HEK293 (cell line): ENCODE measurements at regions of chr7 and their contacts with region 1.

Region 1: DNA sequence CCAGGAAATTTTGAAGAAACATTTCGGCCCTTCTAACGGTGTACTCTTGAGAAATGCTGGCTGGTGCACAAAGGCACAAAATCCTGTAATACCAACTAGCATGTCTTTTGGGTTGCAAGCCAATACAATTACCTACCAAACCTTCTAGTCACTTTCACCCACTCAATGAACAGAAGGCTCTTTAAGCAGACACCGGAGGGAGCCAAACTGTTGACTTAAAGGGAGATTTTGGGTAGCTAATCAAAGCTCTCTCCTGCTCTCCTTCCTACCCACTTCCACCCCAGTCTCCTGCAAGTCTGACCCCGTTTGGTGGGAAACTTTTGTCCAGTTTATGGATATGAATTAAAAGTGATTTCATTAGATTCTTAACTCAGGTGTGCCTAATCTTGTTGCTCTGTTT is 24.0 kb downstream of the GRM3 start:
- H3K4me3 ChIP-seq: no peak overlapping the region
- H3K27ac ChIP-seq: no peak overlapping the region
- H3K4me1 ChIP-seq: no peaks in the 10 kb centered on the region
- CTCF ChIP-seq: peak; percentile 18; the same call in 1 of the 2 replicates

Region 2: GRCh38 chr7:86904949-86905834 is 237.5 kb after region 1 on chr7:
- CTCF ChIA-PET with region 1: interaction called, 14 read pairs
- POLR2A ChIA-PET with region 1: no interaction called
- H3K4me3 ChIP-seq: no peak overlapping the region
- H3K27ac ChIP-seq: no peak overlapping the region
- H3K4me1 ChIP-seq: no peaks in the 10 kb centered on the region
- CTCF ChIP-seq: no peak